IMR-90 (cell line): ENCODE measurements at regions of chr19 and their contacts with region 1.

Region 1: DNA sequence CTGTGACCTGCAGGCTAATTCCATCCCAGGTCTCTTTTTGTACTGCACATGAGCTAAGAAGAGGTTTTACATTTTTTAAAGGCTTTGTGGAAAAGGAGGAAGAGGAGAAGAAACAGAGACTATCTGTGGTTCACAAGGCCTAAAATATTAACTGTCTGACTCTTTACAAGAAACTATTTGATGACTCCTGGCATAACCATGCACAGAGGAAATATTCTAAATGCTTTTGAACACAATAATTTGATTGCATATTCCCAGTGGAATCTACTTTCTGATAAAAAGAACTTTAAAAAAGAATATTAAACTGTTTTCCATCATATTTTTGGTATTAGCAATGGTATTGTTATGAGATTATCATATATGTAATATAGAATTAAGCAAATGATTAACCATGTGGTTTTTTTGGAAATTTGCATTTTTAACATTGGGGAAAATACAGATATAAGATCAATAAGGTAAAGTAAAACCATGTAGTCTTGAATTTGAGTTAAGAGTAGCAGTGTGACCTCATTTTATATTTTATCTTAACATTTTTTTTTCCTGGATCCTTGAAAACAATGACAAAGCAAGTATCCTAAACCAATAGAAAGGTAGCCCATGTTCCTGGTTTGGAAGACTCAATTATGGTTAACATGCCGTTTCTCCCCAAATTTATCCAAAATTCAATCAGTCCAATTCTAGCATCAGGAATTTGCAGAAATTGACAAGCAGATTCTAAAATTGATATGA is 251.0 kb downstream of the UQCRFS1 start:
- DNase-seq: peak; percentile 81
- ATAC-seq: peak; percentile 89
- H3K4me3 ChIP-seq: no peak overlapping the region
- H3K27ac ChIP-seq: peak overlapping the region; percentile 9; the same call in 1 of the 2 replicates
- H3K4me1 ChIP-seq: peaks cover 11% of the 10 kb centered on the region
- H3K27me3 ChIP-seq: no peaks in the 10 kb centered on the region
- CTCF ChIP-seq: no peak
- POLR2A ChIP-seq: no peak
- RAD21 ChIP-seq: no peak

Region 2: DNA sequence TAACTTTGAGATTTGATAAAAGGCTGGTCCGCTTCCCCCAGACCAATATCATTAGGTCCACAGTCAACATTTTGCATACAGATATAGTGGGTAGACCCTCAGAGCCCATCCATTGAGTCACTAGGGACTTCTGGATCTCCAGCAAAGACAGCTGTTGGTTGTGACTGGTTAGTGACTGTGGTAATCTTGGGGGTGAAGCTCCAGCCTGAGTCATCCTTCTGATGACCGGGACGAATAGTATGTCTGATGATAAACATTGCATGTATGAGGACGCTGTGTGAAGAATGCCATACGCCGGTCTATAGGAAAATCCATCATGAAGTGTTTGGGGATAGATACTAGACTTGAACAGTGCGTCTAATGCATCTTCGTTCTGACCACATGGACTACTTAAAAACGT is 55.9 kb before region 1 on chr19:
- CTCF ChIA-PET with region 1: no interaction called
- POLR2A ChIA-PET with region 1: no interaction called
- dilution Hi-C with region 1: no loop called
- in situ Hi-C with region 1: no loop called
- intact Hi-C with region 1: loop called (anchors 2 kb)
- DNase-seq: peak; percentile 88
- ATAC-seq: peak; percentile 91
- H3K4me3 ChIP-seq: no peak overlapping the region
- H3K27ac ChIP-seq: no peak overlapping the region
- H3K4me1 ChIP-seq: 0 out of 2 replicates have a peak, but pooled peaks cover 2% of the 10 kb centered on the region
- H3K27me3 ChIP-seq: peaks cover 1% of the 10 kb centered on the region; the same call in 1 of the 2 replicates
- CTCF ChIP-seq: no peak
- POLR2A ChIP-seq: no peak
- RAD21 ChIP-seq: no peak